ENCODE measurements at regions of chr11 and their contacts with region 1.

Region 1: GRCh38 chr11:45045683-45046471 is 95.2 kb upstream of the TP53I11 start:
- DNase-seq: peak; percentile 89 to 90 (median 90)
- H3K4me3 ChIP-seq: peak overlapping the region in 1 of 3 experiments; percentile 61
- H3K4me3 Mint-ChIP-seq: peak overlapping the region; percentile 63 to 89
- H3K27ac ChIP-seq: peak overlapping the region; percentile 95 to 98
- H3K27ac Mint-ChIP-seq: peak overlapping the region; percentile 95 to 100 (median 99)
- H3K4me1 ChIP-seq: peaks cover 62 to 79% of the 10 kb centered on the region in 2 donors
- H3K4me1 Mint-ChIP-seq: peaks cover 69% of the 10 kb centered on the region
- H3K27me3 ChIP-seq: no peaks in the 10 kb centered on the region
- H3K27me3 Mint-ChIP-seq: peaks cover 2 to 4% (median 4%) of the 10 kb centered on the region in 3 donors
- CTCF ChIP-seq: no peak

Region 2: DNA sequence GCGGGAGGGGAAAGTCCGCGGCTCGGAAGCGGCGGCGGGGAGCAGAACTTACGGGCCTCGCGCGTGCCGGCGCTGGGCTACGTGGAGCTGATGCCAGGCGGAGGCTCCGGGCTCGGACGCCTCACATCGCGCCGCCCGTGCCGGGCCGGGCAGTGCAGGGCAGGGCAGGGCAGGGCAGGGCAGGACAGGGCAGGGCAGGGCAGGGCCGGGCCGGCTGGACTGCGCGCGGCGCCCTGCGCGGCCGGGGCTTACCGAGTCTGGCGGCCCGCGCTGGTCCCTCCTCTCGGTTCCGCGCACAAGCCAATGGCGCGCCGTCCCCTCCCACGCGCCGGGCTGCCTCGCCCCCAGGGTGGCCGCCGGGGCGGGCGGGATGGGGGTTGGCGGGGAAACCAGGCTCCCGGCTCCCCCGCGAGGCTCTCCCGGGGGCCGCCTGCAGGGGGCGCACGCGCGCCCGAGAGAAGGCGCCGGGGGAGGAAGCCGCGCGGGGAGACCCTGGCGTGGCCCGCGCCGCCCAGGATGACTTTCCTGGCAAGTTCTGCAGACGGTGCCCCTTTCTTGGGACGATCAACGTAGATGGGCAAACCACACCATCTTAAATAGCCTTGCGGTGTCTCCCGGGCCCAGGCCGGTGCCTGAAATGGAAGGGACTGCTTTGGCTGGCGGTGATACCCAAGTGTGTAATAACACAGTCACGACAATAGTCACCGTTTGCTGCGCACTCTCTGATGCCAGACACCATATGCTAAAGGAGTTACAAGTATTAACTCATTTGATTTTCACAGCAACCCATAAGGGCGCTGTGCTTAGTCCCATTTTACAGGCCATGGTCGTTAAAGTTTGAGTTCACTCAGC is 95.0 kb before region 1 on chr11 and contains the start of gene TP53I11:
- intact Hi-C with region 1: loop called (anchors 10 kb)
- DNase-seq: peak; percentile 44 to 56 (median 48)
- H3K4me3 ChIP-seq: peak within 1 kb of the TSS; percentile 75 to 92 (median 84)
- H3K4me3 Mint-ChIP-seq: peak within 1 kb of the TSS; percentile 84 to 89
- H3K27ac ChIP-seq: peak within 1 kb of the TSS in 1 of 2 donors; percentile 79
- H3K27ac Mint-ChIP-seq: peak within 1 kb of the TSS in 6 of 7 donors; percentile 26 to 72 (median 68)
- H3K4me1 ChIP-seq: peaks cover 39 to 57% of the 10 kb centered on the region in 2 donors
- H3K4me1 Mint-ChIP-seq: peaks cover 52% of the 10 kb centered on the region
- H3K27me3 ChIP-seq: peaks cover 0 to 3% of the 10 kb centered on the region in 2 donors
- H3K27me3 Mint-ChIP-seq: peaks cover 3 to 15% (median 5%) of the 10 kb centered on the region in 3 donors
- CTCF ChIP-seq: peak; percentile 82
- polyA plus RNA-seq, gene TP53I11: 11.0 to 13.2 (median 11.3) TPM

Region 3: GRCh38 chr11:45057938-45058646 is 12.2 kb after region 1 on chr11:
- intact Hi-C with region 1: no loop called
- DNase-seq: no peak
- H3K4me3 ChIP-seq: peak overlapping the region in 1 of 3 experiments; percentile 34
- H3K4me3 Mint-ChIP-seq: peak overlapping the region in 1 of 2 donors; percentile 55
- H3K27ac ChIP-seq: peak overlapping the region in 1 of 2 donors; percentile 58
- H3K27ac Mint-ChIP-seq: peak overlapping the region in 6 of 7 donors; percentile 19 to 82 (median 45)
- H3K4me1 ChIP-seq: peaks cover 23 to 32% of the 10 kb centered on the region in 2 donors
- H3K4me1 Mint-ChIP-seq: peaks cover 36% of the 10 kb centered on the region
- H3K27me3 ChIP-seq: no peaks in the 10 kb centered on the region
- H3K27me3 Mint-ChIP-seq: peaks cover 2 to 7% (median 5%) of the 10 kb centered on the region in 3 donors
- CTCF ChIP-seq: no peak

Region 4: DNA sequence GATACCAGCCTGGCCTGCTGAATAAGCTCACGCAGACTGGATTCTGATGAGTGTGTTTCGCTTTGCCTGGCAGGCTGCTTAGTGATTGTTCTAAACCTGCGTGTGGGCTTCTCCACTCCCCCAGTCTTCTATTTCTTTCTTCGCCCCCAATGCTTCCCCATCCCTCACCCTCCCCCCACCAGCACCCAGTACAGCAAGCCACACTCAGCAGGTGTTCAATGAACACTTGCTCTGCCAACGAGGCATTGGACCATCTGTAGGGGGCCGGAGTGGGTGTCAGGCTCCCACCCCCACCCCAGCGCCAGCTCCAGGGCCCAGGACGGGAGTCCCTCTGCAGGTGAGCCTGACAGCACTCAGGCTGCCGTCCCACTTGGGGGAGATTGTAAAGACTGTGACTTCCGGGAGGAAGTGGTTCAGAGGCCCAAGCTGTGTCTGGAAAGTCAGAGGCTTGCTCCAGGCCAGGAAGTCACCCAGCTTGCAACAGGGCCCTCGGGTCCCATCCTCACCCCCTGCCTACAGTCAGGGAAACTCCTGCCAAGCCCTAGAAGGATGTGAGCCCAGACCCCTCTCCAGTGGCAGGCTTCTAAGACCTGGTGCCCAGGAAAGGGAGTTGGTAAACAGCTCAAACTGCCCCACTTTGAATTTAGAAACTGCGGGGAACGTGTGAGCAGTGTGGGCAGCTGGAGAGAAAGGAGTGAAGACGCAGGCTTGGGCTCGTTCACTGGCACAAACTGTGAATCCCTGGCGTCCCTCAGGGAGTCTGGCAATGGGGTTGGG is 34.3 kb after region 1 on chr11:
- intact Hi-C with region 1: loop called in 1 of 2 experiments (anchors 5 kb)
- DNase-seq: peak; percentile 62 to 79 (median 72)
- H3K4me3 ChIP-seq: peak overlapping the region in 1 of 3 experiments; percentile 41
- H3K4me3 Mint-ChIP-seq: peak overlapping the region in 1 of 2 donors; percentile 70
- H3K27ac ChIP-seq: peak overlapping the region; percentile 26 to 80
- H3K27ac Mint-ChIP-seq: peak overlapping the region; percentile 50 to 91 (median 81)
- H3K4me1 ChIP-seq: peaks cover 50 to 51% of the 10 kb centered on the region in 2 donors
- H3K4me1 Mint-ChIP-seq: peaks cover 55% of the 10 kb centered on the region
- H3K27me3 ChIP-seq: no peaks in the 10 kb centered on the region
- H3K27me3 Mint-ChIP-seq: peaks cover 0 to 8% (median under 1%) of the 10 kb centered on the region in 3 donors
- CTCF ChIP-seq: no peak

Region 5: DNA sequence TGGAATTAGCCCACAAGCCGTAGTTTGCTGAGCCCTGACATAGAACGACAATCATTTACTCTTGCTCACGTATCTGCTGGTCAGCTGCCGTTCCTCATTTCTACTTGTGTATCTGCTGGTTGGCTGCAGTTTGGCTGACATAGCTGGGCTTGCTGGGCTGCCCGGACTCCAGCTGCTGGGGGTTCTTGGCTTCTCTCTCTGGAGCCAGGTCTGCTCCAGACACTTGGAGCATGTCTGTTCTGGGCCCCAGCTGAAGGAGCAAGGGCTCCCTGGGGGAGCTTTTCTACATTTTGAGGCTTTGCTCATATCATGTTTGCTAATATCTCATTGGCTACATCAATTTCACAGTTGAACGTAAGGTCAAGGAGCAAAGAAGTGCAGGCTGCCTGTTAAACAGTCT is 147.8 kb after region 1 on chr11:
- intact Hi-C with region 1: no loop called
- DNase-seq: no peak
- H3K4me3 ChIP-seq: no peak overlapping the region
- H3K4me3 Mint-ChIP-seq: no peak overlapping the region
- H3K27ac ChIP-seq: no peak overlapping the region
- H3K27ac Mint-ChIP-seq: no peak overlapping the region
- H3K4me1 ChIP-seq: no peaks in the 10 kb centered on the region
- H3K4me1 Mint-ChIP-seq: no peaks in the 10 kb centered on the region
- H3K27me3 ChIP-seq: no peaks in the 10 kb centered on the region
- H3K27me3 Mint-ChIP-seq: peaks cover 0 to 4% (median 1%) of the 10 kb centered on the region in 3 donors
- CTCF ChIP-seq: no peak

Region 6: DNA sequence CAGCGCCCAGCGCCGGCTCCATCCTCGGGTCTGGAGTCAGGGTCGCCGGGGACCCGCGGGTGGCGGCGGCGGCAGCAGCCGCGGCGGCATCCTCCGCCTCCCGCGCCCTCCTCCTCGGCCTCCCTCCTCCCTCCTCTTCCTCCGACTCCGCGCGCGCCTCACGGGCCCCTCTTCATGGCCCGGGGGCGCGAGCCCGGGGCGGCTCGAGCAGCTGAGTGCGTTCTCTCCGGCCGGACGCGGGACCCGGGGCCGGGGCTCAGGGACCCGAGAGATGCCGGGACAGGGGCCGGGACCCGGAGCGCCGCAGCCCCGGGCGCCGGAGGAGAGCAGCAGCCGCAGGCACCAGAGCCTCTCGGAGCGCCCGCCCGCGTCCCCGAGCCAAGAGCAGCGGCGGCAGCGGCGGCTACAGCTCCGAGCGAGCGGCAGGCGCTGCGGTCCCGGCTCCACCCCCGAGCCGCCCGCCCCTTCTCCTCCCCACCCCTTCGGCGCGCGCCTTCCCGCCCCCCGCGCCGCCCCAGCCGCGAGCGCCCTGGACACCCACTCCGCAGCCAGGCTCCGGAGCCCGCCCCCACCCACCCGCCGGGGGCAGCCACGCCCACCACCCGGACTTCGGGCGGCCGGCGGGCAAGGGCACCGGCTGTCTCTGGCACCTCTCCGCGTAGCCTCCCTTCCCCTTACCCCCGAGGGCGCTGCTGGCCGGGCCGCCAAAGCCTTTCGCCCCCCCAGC is 619.5 kb after region 1 on chr11 and contains the start of gene CHST1:
- intact Hi-C with region 1: no loop called
- DNase-seq: no peak
- H3K4me3 ChIP-seq: peak within 1 kb of the TSS in 1 of 3 experiments; percentile 14
- H3K4me3 Mint-ChIP-seq: peak within 1 kb of the TSS in 1 of 2 donors; percentile 78
- H3K27ac ChIP-seq: no peak within 1 kb of the TSS
- H3K27ac Mint-ChIP-seq: no peak within 1 kb of the TSS
- H3K4me1 ChIP-seq: peaks cover 0 to 6% of the 10 kb centered on the region in 2 donors
- H3K4me1 Mint-ChIP-seq: peaks cover 2% of the 10 kb centered on the region
- H3K27me3 ChIP-seq: peaks cover 47 to 74% of the 10 kb centered on the region in 2 donors
- H3K27me3 Mint-ChIP-seq: peaks cover 67 to 90% (median 69%) of the 10 kb centered on the region in 3 donors
- CTCF ChIP-seq: no peak
- polyA plus RNA-seq, gene CHST1: not detected